ENCODE measurements at regions of chr20 and their contacts with region 1.

Region 1: GRCh38 chr20:39429716-39430115 is 467.6 kb downstream of the DHX35 start:
- DNase-seq: no peak
- ATAC-seq: peak; percentile 67; the same call in 1 of the 2 replicates
- H3K4me3 Mint-ChIP-seq: no peak overlapping the region
- H3K27ac Mint-ChIP-seq: no peak overlapping the region
- H3K4me1 Mint-ChIP-seq: no peaks in the 10 kb centered on the region
- H3K27me3 Mint-ChIP-seq: no peaks in the 10 kb centered on the region
- CTCF ChIP-seq: no peak; the same call in 1 of the 2 replicates

Region 2: GRCh38 chr20:39264506-39265172 is 165.1 kb before region 1 on chr20:
- CTCF ChIA-PET with region 1: interaction called, 60 read pairs
- POLR2A ChIA-PET with region 1: no interaction called
- DNase-seq: peak; percentile 66
- ATAC-seq: peak; percentile 69
- H3K4me3 Mint-ChIP-seq: no peak overlapping the region
- H3K27ac Mint-ChIP-seq: no peak overlapping the region
- H3K4me1 Mint-ChIP-seq: peaks cover 5% of the 10 kb centered on the region
- H3K27me3 Mint-ChIP-seq: no peaks in the 10 kb centered on the region
- CTCF ChIP-seq: peak; percentile 91

Region 3: DNA sequence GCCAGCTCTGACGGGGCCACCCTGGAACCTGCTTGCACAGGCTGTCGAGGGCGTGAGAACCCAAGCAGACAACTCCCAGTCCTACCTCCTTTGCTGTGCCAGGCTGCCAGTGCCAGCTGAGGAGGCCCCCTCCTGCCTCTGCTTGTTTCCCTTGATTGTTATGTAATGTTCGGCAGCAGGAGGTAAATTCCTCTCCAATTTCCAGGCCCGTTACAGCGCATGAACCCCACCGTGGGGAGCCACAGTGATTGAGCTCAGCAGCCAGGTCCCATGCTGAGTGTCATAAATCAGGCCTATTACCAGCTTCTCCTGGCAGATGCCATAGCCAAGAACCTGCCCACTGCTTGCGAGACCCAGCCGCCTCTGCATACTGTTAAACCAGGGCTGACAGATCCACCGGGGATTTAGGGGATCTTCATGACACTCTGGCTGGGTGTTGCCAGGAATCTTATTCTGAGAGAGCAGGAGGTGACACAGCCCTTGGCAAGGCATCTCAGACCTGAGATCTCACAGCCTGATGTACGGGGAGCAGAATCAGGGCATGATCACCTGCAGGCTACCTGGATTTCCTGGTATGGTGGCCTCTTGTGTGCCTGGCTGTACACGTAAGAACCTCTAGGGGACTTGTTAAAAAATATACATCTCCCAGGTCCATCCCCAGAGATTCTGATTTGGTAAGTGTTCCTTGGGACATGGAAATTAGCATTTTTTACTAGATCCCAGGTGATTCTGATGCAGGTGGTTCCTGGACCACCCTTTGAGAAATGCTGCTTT is 146.9 kb before region 1 on chr20:
- CTCF ChIA-PET with region 1: interaction called, 14 read pairs
- POLR2A ChIA-PET with region 1: no interaction called
- DNase-seq: peak; percentile 73
- ATAC-seq: peak; percentile 85
- H3K4me3 Mint-ChIP-seq: peak overlapping the region; percentile 32
- H3K27ac Mint-ChIP-seq: no peak overlapping the region
- H3K4me1 Mint-ChIP-seq: peaks cover 50% of the 10 kb centered on the region
- H3K27me3 Mint-ChIP-seq: peaks cover 53% of the 10 kb centered on the region
- CTCF ChIP-seq: no peak

Region 4: GRCh38 chr20:39289316-39289715 is 140.4 kb before region 1 on chr20:
- CTCF ChIA-PET with region 1: interaction called, 23 read pairs
- POLR2A ChIA-PET with region 1: no interaction called
- DNase-seq: peak; percentile 47
- ATAC-seq: peak; percentile 81
- H3K4me3 Mint-ChIP-seq: no peak overlapping the region
- H3K27ac Mint-ChIP-seq: 0 out of 2 replicates have a peak overlapping the region, but pooled peaks have one; percentile 3
- H3K4me1 Mint-ChIP-seq: peaks cover 62% of the 10 kb centered on the region
- H3K27me3 Mint-ChIP-seq: peaks cover 19% of the 10 kb centered on the region
- CTCF ChIP-seq: peak; percentile 38; the same call in 1 of the 2 replicates

Region 5: GRCh38 chr20:39398656-39399055 is 31.1 kb before region 1 on chr20:
- CTCF ChIA-PET with region 1: interaction called, 15 read pairs
- POLR2A ChIA-PET with region 1: no interaction called
- DNase-seq: peak; percentile 13
- ATAC-seq: peak; percentile 84
- H3K4me3 Mint-ChIP-seq: no peak overlapping the region
- H3K27ac Mint-ChIP-seq: no peak overlapping the region
- H3K4me1 Mint-ChIP-seq: no peaks in the 10 kb centered on the region
- H3K27me3 Mint-ChIP-seq: peaks cover 2% of the 10 kb centered on the region
- CTCF ChIP-seq: no peak

Region 6: DNA sequence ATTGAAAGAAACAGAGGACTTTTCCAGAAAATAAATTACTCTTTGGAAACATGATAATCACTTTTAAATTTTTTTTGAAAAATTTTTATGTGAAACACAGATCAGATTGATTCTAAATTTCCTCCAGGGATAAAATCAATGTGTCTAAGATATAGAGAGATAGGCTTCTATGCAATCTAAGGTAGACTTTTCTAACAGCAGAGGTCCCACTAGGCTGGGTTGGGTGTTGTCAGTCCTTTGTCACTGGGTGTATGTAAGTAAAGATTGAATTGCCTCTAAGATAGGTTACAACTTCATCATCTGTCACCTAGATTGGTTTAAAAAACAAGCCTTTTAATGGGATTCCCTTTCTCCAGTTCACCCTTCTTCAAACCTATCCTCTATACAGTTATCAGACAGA is 17.6 kb before region 1 on chr20:
- CTCF ChIA-PET with region 1: interaction called, 11 read pairs
- POLR2A ChIA-PET with region 1: no interaction called
- DNase-seq: no peak
- ATAC-seq: no peak
- H3K4me3 Mint-ChIP-seq: no peak overlapping the region
- H3K27ac Mint-ChIP-seq: no peak overlapping the region
- H3K4me1 Mint-ChIP-seq: peaks cover 2% of the 10 kb centered on the region
- H3K27me3 Mint-ChIP-seq: no peaks in the 10 kb centered on the region
- CTCF ChIP-seq: no peak